A673 (cell line): ENCODE measurements at regions of chr5 and their contacts with region 1.

Region 1: GRCh38 chr5:99317136-99317535 is 388.3 kb upstream of the CHD1 start:
- DNase-seq: peak; percentile 80
- H3K4me3 ChIP-seq: no peak overlapping the region
- H3K27ac ChIP-seq: no peak overlapping the region
- H3K4me1 ChIP-seq: no peaks in the 10 kb centered on the region
- H3K27me3 ChIP-seq: no peaks in the 10 kb centered on the region
- CTCF ChIP-seq: no peak

Region 2: GRCh38 chr5:98513380-98513779 is 803.8 kb before region 1 on chr5:
- CTCF ChIA-PET with region 1: no interaction called
- POLR2A ChIA-PET with region 1: no interaction called
- intact Hi-C with region 1: no loop called
- DNase-seq: peak; percentile 9
- H3K4me3 ChIP-seq: no peak overlapping the region
- H3K27ac ChIP-seq: no peak overlapping the region
- H3K4me1 ChIP-seq: no peaks in the 10 kb centered on the region
- H3K27me3 ChIP-seq: peaks cover 20% of the 10 kb centered on the region
- CTCF ChIP-seq: no peak

Region 3: GRCh38 chr5:98763001-98763630 is 554.0 kb before region 1 on chr5:
- CTCF ChIA-PET with region 1: no interaction called
- POLR2A ChIA-PET with region 1: no interaction called
- intact Hi-C with region 1: no loop called
- DNase-seq: no peak
- H3K4me3 ChIP-seq: no peak overlapping the region
- H3K27ac ChIP-seq: no peak overlapping the region
- H3K4me1 ChIP-seq: no peaks in the 10 kb centered on the region
- H3K27me3 ChIP-seq: peaks cover 25% of the 10 kb centered on the region
- CTCF ChIP-seq: no peak

Region 4: GRCh38 chr5:99104538-99105132 is 212.5 kb before region 1 on chr5:
- CTCF ChIA-PET with region 1: no interaction called
- POLR2A ChIA-PET with region 1: no interaction called
- intact Hi-C with region 1: loop called (anchors 10 kb)
- DNase-seq: peak; percentile 63
- H3K4me3 ChIP-seq: no peak overlapping the region
- H3K27ac ChIP-seq: no peak overlapping the region
- H3K4me1 ChIP-seq: no peaks in the 10 kb centered on the region
- H3K27me3 ChIP-seq: peaks cover 2% of the 10 kb centered on the region
- CTCF ChIP-seq: peak; percentile 72

Region 5: DNA sequence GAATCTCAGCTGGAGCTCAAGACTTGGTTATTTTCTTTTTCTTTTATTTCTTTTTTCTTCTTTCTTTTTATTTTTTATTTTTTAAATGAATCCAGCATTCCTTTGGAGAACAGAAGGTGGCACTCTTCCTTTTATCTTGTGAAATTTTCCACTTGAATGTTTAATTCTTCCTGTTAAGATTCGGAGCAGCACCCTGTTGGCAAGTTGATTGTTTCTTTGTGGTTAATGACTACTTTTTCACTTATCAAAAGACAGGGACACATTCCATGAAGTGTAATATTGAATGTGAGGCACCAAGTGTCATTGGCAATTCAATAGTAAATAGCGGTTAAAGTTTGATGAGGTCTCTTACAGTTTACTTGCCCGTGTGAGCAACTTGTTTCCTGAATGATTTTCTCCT is 147.8 kb before region 1 on chr5:
- CTCF ChIA-PET with region 1: no interaction called
- POLR2A ChIA-PET with region 1: no interaction called
- intact Hi-C with region 1: loop called (anchors 5 kb)
- DNase-seq: peak; percentile 44
- H3K4me3 ChIP-seq: no peak overlapping the region
- H3K27ac ChIP-seq: no peak overlapping the region
- H3K4me1 ChIP-seq: no peaks in the 10 kb centered on the region
- H3K27me3 ChIP-seq: peaks cover 6% of the 10 kb centered on the region
- CTCF ChIP-seq: peak; percentile 60